Activated CD8-positive, alpha-beta T cell treated with anti-CD3 and anti-CD28 coated beads for 36 hours (primary cell): ENCODE measurements at regions of chr22 and their contacts with region 1.

Region 1: GRCh38 chr22:36379593-36380361 is 8.0 kb downstream of the MYH9 start:
- DNase-seq: peak; percentile 61
- ATAC-seq: peak; percentile 29
- H3K4me3 Mint-ChIP-seq: peak overlapping the region; percentile 72
- H3K27ac Mint-ChIP-seq: peak overlapping the region; percentile 96
- H3K4me1 Mint-ChIP-seq: peaks cover 86% of the 10 kb centered on the region
- H3K27me3 Mint-ChIP-seq: no peaks in the 10 kb centered on the region
- CTCF ChIP-seq: no peak

Region 2: DNA sequence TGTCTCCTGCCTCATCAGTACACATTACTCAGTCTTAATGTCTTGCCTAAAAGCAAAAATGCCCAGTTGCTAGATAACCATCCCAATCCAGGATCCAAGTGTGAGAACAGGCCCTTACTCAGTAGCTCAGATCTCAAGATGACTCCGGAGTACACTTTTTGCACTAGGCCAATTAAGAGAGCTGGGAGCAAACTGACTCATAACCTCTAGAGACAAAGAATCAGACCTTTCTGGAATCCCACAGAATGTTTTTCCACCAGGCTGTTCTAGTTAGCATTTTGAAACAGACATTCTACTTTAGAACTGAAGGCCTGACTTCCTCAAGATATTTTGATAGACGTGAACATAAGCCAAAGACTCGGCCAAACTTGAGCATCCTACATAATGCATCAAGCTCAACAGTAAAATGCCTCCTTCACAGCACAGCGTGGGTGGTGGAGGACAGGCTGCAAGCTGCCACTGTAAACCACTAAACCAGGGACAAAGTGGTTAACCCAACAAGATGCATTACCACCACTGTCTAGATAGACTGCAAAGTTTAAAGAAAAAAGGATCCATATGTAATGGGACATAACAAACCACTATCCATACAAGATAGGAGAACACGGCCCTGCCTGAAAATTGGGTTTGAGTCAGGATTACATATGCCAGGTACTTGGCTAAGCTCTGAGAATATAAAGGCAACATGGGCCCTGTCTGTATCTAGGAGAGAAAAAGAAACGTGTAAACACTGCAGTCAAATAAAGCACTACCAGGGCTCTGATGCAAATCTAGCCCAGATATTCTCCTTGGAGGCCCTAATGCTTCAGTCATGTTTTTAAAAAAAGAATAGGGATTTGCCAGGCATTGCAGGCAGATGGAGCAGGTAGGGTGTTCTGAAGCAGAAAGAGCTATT is 40.4 kb before region 1 on chr22:
- CTCF ChIA-PET with region 1: interaction called, 30 read pairs
- POLR2A ChIA-PET with region 1: interaction called, 1,125 read pairs
- intact Hi-C with region 1: loop called (anchors 5 kb)
- DNase-seq: peak; percentile 82
- ATAC-seq: peak; percentile 25
- H3K4me3 Mint-ChIP-seq: no peak overlapping the region
- H3K27ac Mint-ChIP-seq: peak overlapping the region; percentile 88
- H3K4me1 Mint-ChIP-seq: peaks cover 93% of the 10 kb centered on the region
- H3K27me3 Mint-ChIP-seq: no peaks in the 10 kb centered on the region
- CTCF ChIP-seq: no peak

Region 3: GRCh38 chr22:36365020-36365411 is 14.8 kb before region 1 on chr22:
- CTCF ChIA-PET with region 1: interaction called, 12 read pairs
- POLR2A ChIA-PET with region 1: interaction called, 1,125 read pairs
- intact Hi-C with region 1: no loop called
- DNase-seq: peak; percentile 97
- ATAC-seq: peak; percentile 88
- H3K4me3 Mint-ChIP-seq: peak overlapping the region; percentile 69
- H3K27ac Mint-ChIP-seq: peak overlapping the region; percentile 98
- H3K4me1 Mint-ChIP-seq: peaks cover 93% of the 10 kb centered on the region
- H3K27me3 Mint-ChIP-seq: no peaks in the 10 kb centered on the region
- CTCF ChIP-seq: no peak